Activated CD8-positive, alpha-beta T cell treated with anti-CD3 and anti-CD28 coated beads for 36 hours (primary cell): ENCODE measurements at regions of chr13 and their contacts with region 1.

Region 1: GRCh38 chr13:50911937-50912795 is 2.6 kb downstream of the RNASEH2B start:
- DNase-seq: peak; percentile 98
- ATAC-seq: peak; percentile 70
- H3K4me3 Mint-ChIP-seq: peak overlapping the region; percentile 96
- H3K27ac Mint-ChIP-seq: peak overlapping the region; percentile 98
- H3K4me1 Mint-ChIP-seq: peaks cover 52% of the 10 kb centered on the region
- H3K27me3 Mint-ChIP-seq: no peaks in the 10 kb centered on the region
- CTCF ChIP-seq: peak; percentile 80

Region 2: DNA sequence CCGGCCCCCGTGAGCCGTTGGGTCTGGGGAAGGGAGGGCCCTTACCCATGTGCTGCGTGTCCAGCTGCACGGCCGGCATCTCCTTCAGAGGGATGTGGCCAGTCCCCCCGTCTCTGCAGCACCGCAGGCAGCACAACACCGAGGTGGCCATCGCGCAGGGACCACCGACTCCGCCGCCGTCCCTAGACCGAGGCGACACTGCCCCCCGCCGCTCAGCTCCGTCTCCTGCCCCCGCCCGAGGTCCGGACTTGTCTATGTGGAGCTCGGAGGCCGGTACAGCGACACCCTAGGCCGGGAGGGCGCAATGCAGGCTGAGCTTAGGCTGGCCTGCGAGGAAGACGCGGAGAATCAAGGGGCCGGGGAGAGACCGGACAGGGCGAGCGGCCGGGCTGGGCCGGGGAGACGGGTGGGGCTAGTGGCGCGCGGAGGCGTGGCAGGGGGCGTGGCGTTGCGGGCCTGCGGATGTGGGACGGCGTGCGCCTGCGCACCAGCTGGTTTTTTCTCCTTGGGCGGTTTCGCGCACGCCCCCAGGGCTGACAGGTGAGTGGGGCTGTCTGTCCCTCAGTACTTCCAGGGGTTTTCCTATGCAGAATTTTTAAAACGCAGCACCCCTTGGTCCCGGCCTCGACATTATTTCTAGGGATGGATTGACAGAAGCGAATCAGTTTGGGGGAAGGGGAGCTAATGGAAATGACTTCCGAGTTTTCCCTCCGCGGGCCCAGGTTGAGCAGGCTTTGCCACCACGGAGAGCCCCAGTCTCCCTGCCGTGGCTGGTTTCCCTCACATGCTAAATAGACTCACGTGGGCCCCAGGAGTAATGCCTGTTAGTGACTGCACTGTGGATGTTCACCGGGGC is 975.9 kb before region 1 on chr13 and contains the start of gene SPRYD7:
- CTCF ChIA-PET with region 1: interaction called, 8 read pairs
- POLR2A ChIA-PET with region 1: no interaction called
- intact Hi-C with region 1: loop called (anchors 2 kb)
- DNase-seq: peak; percentile 96
- ATAC-seq: peak; percentile 99
- H3K4me3 Mint-ChIP-seq: peak within 1 kb of the TSS; percentile 80
- H3K27ac Mint-ChIP-seq: peak within 1 kb of the TSS; percentile 85
- H3K4me1 Mint-ChIP-seq: peaks cover 13% of the 10 kb centered on the region
- H3K27me3 Mint-ChIP-seq: peaks cover 1% of the 10 kb centered on the region
- CTCF ChIP-seq: peak; percentile 89
- total RNA-seq, gene SPRYD7: 6.3 to 6.7 TPM

Region 3: GRCh38 chr13:49996951-49997895 is 914.9 kb before region 1 on chr13 and contains the start of gene TRIM13:
- CTCF ChIA-PET with region 1: interaction called, 14 read pairs
- POLR2A ChIA-PET with region 1: no interaction called
- intact Hi-C with region 1: no loop called
- DNase-seq: peak; percentile 91
- ATAC-seq: peak; percentile 86
- H3K4me3 Mint-ChIP-seq: peak within 1 kb of the TSS; percentile 86
- H3K27ac Mint-ChIP-seq: peak within 1 kb of the TSS; percentile 91
- H3K4me1 Mint-ChIP-seq: peaks cover 32% of the 10 kb centered on the region
- H3K27me3 Mint-ChIP-seq: no peaks in the 10 kb centered on the region
- CTCF ChIP-seq: peak; percentile 80
- total RNA-seq, gene TRIM13: 12.5 to 13.4 TPM

Region 4: DNA sequence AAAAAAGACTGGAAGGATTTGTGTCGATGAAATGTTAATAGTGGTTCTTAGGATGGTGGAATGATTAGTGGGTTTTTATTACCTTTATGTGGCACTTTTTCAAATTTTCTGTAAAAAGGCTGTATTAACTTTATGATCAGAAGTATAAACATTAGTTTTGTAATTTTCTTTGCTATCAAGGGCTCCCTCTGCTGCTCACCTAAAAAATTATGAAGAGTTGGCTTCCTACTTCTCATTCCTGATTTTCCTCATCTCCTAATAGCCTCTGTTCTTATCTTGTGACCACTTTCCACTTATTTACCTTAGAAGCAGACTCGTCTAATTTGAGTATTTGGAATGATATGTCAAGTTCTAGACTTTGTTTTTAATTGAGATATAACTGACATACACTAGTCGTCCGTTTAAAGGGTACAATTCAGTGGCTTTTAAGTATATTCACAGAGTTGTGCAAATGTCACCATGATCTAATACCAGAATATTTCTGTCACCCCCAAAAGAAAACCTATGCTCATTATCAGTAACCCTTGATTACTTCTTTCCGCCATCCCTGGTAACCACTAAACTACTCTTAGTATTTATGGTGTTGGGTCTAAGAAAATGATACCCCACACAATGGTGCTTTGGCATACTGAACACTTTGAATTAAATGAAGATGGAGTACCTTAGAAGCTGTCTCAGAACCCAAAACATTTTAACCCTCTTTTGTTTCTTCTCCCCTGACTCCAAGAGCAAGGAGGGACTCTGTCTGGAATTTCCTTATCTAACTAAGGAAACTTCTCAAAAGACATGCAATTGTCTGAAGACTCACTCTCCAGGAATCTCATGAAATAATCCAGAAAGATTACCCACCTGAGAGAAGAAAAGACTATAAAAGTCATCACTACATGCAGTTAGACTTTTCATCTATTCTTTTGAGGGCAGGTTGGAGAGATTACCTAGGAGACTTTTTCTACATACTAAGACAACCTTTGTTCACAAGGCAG is 380.0 kb before region 1 on chr13:
- CTCF ChIA-PET with region 1: no interaction called
- POLR2A ChIA-PET with region 1: no interaction called
- intact Hi-C with region 1: loop called (anchors 10 kb)
- DNase-seq: no peak
- ATAC-seq: no peak
- H3K4me3 Mint-ChIP-seq: no peak overlapping the region
- H3K27ac Mint-ChIP-seq: no peak overlapping the region
- H3K4me1 Mint-ChIP-seq: peaks cover 13% of the 10 kb centered on the region
- H3K27me3 Mint-ChIP-seq: no peaks in the 10 kb centered on the region
- CTCF ChIP-seq: peak; percentile 50

Region 5: DNA sequence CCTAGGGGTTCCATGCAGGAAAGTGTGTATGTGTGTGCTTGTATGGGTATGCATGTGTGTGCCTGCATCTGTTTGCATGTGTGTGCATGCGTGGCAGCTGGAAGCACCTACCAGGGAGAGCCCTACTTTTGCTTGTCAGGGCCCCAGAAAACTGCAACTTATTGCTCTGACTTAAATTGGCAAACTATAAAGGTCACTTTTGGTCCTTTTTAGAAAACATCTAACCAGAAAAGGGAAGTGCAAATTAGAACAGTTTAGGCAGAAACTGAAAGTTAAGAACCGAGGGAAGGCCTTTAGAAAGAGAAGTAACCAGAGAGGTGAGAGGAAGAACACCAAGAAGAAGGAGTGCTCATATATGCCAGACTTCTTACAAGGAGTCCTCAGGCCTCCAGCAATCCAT is 101.2 kb before region 1 on chr13:
- CTCF ChIA-PET with region 1: interaction called, 14 read pairs
- POLR2A ChIA-PET with region 1: no interaction called
- intact Hi-C with region 1: no loop called
- DNase-seq: no peak
- ATAC-seq: no peak
- H3K4me3 Mint-ChIP-seq: no peak overlapping the region
- H3K27ac Mint-ChIP-seq: no peak overlapping the region
- H3K4me1 Mint-ChIP-seq: peaks cover 6% of the 10 kb centered on the region
- H3K27me3 Mint-ChIP-seq: no peaks in the 10 kb centered on the region
- CTCF ChIP-seq: no peak

Region 6: GRCh38 chr13:50923272-50923671 is 11.1 kb after region 1 on chr13:
- CTCF ChIA-PET with region 1: interaction called, 17 read pairs
- POLR2A ChIA-PET with region 1: no interaction called
- intact Hi-C with region 1: no loop called
- DNase-seq: no peak
- ATAC-seq: no peak
- H3K4me3 Mint-ChIP-seq: no peak overlapping the region
- H3K27ac Mint-ChIP-seq: no peak overlapping the region
- H3K4me1 Mint-ChIP-seq: peaks cover 36% of the 10 kb centered on the region
- H3K27me3 Mint-ChIP-seq: no peaks in the 10 kb centered on the region
- CTCF ChIP-seq: no peak

Region 7: DNA sequence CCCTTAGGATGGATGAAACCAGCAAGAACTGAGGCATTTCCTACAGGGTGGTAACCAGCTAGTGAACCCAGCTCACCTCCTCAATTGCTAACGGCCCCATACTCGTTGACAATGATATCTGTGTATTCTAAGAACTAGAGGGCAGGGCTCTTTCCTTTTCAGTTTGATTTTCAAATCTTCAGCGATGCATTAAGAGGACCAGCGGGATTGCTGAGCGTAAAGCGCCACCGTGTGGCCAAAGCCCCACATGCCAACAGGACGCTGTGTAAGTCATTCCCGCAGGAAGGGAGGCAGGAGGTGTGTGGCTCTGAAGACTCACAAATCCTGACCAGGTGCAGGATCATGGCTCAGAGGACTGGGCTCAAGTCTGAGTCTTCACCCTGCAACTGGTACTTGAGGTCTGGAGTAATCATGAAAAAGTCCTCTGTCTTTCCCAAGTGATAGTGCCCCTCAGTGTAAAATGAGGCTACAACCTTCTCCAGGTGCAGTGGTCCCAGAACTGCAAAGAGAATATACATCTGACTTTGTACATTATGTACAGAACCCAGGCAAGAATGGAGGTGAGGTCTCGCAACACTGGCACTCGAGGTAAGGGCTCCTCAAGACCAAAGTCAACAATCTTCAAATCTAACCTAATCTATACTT is 158.0 kb after region 1 on chr13:
- CTCF ChIA-PET with region 1: interaction called, 6 read pairs
- POLR2A ChIA-PET with region 1: no interaction called
- intact Hi-C with region 1: loop called (anchors 5 kb)
- DNase-seq: peak; percentile 89
- ATAC-seq: peak; percentile 90
- H3K4me3 Mint-ChIP-seq: no peak overlapping the region
- H3K27ac Mint-ChIP-seq: no peak overlapping the region
- H3K4me1 Mint-ChIP-seq: peaks cover 5% of the 10 kb centered on the region
- H3K27me3 Mint-ChIP-seq: peaks cover 11% of the 10 kb centered on the region
- CTCF ChIP-seq: peak; percentile 96